Panc1 (cell line): ENCODE measurements at regions of chr9 and their contacts with region 1.

Region 1: GRCh38 chr9:111621895-111622480 is 9.1 kb upstream of the DNAJC25 start:
- DNase-seq: peak; percentile 51
- ATAC-seq: peak; percentile 93
- H3K4me3 ChIP-seq: no peak overlapping the region
- H3K27ac ChIP-seq: no peak overlapping the region
- H3K4me1 ChIP-seq: no peaks in the 10 kb centered on the region
- H3K27me3 ChIP-seq: no peaks in the 10 kb centered on the region
- CTCF ChIP-seq: peak; percentile 94

Region 2: DNA sequence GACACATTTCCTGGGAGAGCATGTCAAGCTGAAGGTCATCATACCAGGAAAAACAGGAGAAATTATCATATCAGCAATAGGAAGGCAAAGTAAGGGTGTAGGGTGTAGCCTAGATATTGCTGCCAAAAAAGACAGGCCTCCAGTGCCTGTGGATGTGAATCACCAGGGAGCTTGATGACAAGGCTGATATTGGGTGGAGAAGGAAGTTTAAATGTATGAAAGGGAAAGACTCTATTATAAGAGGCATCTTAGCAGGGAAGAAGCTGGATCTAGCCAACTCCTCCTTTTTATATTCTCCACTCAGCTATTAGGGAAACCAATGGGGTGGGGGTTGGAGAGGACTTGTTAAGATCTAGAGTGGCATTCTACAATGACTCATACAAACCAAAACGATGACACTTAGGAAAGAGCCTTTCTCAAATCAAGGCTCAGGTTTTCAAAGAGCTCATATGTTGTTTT is 1271.0 kb before region 1 on chr9:
- CTCF ChIA-PET with region 1: no interaction called
- POLR2A ChIA-PET with region 1: no interaction called
- in situ Hi-C with region 1: no loop called
- intact Hi-C with region 1: no loop called
- DNase-seq: no peak
- ATAC-seq: no peak
- H3K4me3 ChIP-seq: no peak overlapping the region
- H3K27ac ChIP-seq: no peak overlapping the region
- H3K4me1 ChIP-seq: no peaks in the 10 kb centered on the region
- H3K27me3 ChIP-seq: no peaks in the 10 kb centered on the region
- CTCF ChIP-seq: no peak

Region 3: DNA sequence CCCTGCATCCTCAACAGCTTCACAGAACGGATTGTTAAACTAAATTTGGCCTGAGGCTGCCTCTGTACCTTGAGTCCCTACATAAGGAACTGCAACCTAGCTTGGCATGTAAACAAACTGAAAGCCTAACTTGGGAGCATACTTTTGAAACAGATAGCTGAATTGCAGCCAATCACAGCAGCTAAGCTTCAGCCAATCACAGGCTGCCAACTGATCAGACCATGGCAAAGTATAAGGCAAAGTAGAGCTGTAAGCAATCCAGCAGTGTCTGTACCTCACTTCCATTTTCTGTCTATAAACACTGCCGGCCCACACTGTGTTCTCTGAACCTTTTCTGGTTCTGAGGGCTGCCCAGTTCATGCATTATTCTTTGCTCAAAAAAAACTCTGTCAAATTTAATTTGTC is 105.9 kb before region 1 on chr9:
- CTCF ChIA-PET with region 1: no interaction called
- POLR2A ChIA-PET with region 1: no interaction called
- in situ Hi-C with region 1: no loop called
- intact Hi-C with region 1: no loop called
- DNase-seq: no peak
- ATAC-seq: peak; percentile 70
- H3K4me3 ChIP-seq: no peak overlapping the region
- H3K27ac ChIP-seq: no peak overlapping the region
- H3K4me1 ChIP-seq: 0 out of 2 replicates have a peak, but pooled peaks cover 5% of the 10 kb centered on the region
- H3K27me3 ChIP-seq: no peaks in the 10 kb centered on the region
- CTCF ChIP-seq: no peak

Region 4: DNA sequence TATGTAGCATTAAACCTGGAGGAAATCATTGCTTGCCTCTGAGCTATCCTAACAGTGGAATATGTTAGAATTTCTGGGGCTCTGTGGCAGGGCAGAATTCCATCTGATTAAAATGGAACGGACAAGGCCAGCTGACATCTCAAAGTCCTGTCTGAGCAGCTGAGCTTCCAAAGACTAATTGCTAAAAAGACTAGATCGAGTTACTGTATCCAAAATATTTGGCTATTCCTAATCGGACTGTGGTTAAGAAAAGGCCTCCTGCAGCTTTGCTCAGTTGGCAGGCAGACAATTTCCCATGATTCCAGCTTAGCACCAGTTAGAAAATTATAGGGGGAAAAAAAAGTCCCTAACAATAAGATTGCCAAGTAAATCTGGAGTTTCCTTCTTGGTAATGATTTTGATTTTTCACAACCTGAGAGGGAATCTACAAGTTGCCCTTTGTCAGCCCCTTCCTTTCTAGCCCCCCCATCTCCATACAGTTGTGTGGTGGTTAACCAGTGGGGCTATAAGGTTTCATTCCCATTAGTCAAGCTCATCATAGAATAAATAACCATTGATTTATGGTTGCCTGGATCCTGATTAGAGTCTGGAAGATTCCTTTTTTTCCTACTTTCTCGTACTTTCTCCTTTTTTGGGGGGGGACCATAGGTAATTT is 48.9 kb before region 1 on chr9:
- CTCF ChIA-PET with region 1: no interaction called
- POLR2A ChIA-PET with region 1: no interaction called
- in situ Hi-C with region 1: no loop called
- intact Hi-C with region 1: no loop called
- DNase-seq: no peak
- ATAC-seq: no peak
- H3K4me3 ChIP-seq: no peak overlapping the region
- H3K27ac ChIP-seq: no peak overlapping the region
- H3K4me1 ChIP-seq: no peaks in the 10 kb centered on the region
- H3K27me3 ChIP-seq: no peaks in the 10 kb centered on the region
- CTCF ChIP-seq: no peak

Region 5: DNA sequence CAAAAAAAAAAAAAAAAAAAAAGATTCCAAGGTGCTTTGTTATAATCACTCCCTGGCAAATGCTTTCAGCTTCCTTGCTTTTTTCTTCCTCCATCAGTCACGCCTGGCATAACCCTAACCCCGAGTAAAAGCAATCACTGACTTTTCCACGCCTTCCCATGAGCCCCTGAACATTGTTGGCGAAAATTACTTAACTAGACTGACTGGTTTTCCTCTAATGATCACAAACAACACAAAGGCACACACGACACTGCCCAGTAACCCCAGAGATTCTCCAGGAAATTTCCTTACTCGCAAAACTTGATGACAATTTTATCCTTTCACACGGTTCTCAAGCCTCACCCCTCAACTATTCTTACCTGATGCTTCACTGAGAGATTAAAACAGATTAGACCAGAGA is 11.1 kb before region 1 on chr9:
- CTCF ChIA-PET with region 1: interaction called, 3 read pairs
- POLR2A ChIA-PET with region 1: interaction called, 10 read pairs
- in situ Hi-C with region 1: no loop called
- intact Hi-C with region 1: no loop called
- DNase-seq: no peak
- ATAC-seq: no peak
- H3K4me3 ChIP-seq: no peak overlapping the region
- H3K27ac ChIP-seq: no peak overlapping the region
- H3K4me1 ChIP-seq: no peaks in the 10 kb centered on the region
- H3K27me3 ChIP-seq: no peaks in the 10 kb centered on the region
- CTCF ChIP-seq: no peak